BJ (cell line): ENCODE measurements at regions of chr3 and their contacts with region 1.

Region 1: GRCh38 chr3:160355826-160356225 is 43.2 kb downstream of the IFT80 start:
- DNase-seq: no peak
- H3K4me3 ChIP-seq: no peak overlapping the region
- H3K27me3 ChIP-seq: no peaks in the 10 kb centered on the region
- CTCF ChIP-seq: no peak

Region 2: GRCh38 chr3:160401291-160402095 is 45.7 kb after region 1 on chr3:
- CTCF ChIA-PET with region 1: interaction called, 3 read pairs
- POLR2A ChIA-PET with region 1: interaction called, 10 read pairs
- DNase-seq: no peak
- H3K4me3 ChIP-seq: peak overlapping the region; percentile 57
- H3K27me3 ChIP-seq: no peaks in the 10 kb centered on the region
- CTCF ChIP-seq: no peak